ENCODE measurements at regions of chr1 and their contacts with region 1.

Region 1: DNA sequence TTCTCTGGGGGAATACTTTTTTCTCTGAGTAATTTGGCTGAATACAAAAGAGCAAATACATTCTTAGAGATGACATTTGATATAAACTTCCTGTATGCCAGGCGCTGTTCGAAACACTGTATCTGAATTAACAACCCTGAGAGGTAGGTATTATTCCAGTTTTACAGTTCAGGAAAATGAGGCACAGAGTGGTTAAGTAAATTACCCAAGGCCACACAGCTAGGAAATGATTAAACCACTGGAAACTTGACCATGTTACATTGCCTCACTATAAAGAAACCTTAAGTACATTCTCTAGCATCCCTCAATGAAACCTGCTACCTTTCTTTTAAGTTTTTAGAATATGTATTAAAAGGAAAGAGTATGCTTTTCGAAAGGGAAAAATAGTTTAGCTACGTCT is 54.6 kb downstream of the SMYD2 start:
- DNase-seq: no peak

Region 2: DNA sequence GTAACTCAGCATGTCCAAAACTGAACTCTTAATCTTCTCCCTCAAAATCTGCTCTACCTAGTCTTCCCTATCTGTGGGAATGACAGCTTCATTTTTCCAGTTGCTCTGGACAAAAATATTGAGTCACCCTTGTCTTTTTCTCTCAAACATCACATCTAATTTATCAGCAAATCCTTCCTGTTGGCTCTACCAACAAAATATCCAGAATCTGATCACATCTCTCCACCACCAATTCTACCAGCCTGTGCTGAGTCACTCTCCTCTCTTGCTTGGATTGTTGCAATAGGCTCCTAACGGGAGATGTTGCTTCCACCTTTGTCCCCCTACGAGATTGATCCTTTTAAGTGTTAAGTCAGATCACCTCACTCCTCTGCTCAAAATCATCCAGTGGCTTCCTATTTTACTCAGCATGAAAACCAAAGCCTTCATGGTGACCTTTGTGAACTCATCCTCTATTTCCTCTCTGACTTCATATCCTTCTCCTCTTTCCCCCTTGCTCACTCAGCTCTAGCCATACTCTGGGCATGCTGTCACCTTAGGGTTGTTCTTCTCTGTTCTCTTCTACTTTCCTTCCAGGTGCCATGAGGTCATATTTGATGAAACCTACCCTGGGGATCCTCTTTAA is 76.1 kb before region 1 on chr1:
- intact Hi-C with region 1: no loop called
- DNase-seq: no peak

Region 3: DNA sequence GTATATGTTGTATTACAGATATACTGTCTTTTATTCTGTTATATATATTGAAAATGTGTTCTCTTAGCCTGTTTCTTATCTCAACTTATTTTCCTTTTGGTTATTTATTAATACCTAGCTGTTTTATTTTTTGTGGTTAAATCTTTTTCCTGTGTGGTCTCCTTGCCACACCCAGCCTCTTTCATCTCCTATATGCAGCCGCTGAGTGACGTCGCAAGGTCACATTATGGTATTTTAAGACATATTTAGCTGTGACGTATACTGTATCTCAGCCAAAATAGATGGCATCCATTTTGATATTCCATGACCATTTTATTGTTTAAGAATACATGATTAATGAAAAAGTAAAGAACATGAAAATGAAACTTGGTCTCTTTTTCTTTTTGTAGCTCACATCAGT is 296.5 kb after region 1 on chr1:
- intact Hi-C with region 1: loop called (anchors 2 kb)
- DNase-seq: no peak

Measured in posterior cingulate gyrus (tissue), 11 donors.